ENCODE measurements at regions of chr3 and their contacts with region 1.

Region 1: DNA sequence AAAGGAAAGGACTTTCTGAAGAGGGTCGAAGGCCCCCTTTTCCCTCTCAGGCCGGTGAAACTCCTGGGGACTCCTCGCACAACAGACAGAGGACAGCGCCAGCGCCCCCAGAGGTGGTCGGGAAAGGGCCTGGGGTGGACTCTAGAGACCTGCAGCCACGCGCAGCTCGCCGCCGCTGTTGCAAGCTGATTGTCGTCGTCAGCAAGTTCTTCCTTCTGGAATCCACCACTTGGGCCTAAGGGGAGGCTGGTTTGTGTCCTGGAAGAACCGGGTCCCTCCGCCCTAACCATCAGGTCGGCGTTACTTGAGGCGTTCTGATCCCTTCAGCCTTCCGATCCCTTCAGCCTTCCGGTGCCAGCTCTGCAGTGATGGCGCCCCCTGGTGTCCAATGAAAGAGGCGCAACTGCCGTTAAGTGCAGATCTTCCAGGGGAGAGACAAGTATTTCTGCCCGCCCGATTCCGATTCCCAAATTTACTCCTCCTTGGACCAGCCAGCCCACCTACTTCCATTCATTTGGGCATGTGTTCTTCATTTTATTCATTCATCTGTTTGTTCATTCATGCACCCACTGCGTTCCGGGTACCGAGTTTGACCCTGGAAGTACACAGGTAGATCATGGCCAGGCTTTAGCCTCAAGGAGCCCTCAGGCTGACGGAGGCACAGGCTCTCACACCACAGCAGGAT is 77.2 kb upstream of the SLC6A11 start:
- DNase-seq: peak; percentile 9
- H3K4me3 ChIP-seq: peak overlapping the region in 1 of 4 donors; percentile 29
- H3K27ac ChIP-seq: no peak overlapping the region
- H3K4me1 ChIP-seq: peaks cover 0 to 6% (median 0%) of the 10 kb centered on the region in 3 donors
- H3K27me3 ChIP-seq: peaks cover 0 to 70% (median 2%) of the 10 kb centered on the region in 4 donors
- CTCF ChIP-seq: peak; percentile 71 to 88 (median 84)
- POLR2A ChIP-seq: no peak

Region 2: GRCh38 chr3:10344147-10344943 is 394.5 kb before region 1 on chr3:
- intact Hi-C with region 1: loop called (anchors 5 kb)
- DNase-seq: no peak
- H3K4me3 ChIP-seq: no peak overlapping the region
- H3K27ac ChIP-seq: no peak overlapping the region
- H3K4me1 ChIP-seq: peaks cover 0 to 6% (median 0%) of the 10 kb centered on the region in 3 donors
- H3K27me3 ChIP-seq: peaks cover 0 to 8% (median 0%) of the 10 kb centered on the region in 4 donors
- CTCF ChIP-seq: peak; percentile 74 to 85 (median 78)
- POLR2A ChIP-seq: no peak

Region 3: GRCh38 chr3:10672422-10672821 is 66.4 kb before region 1 on chr3:
- intact Hi-C with region 1: no loop called
- DNase-seq: no peak
- H3K4me3 ChIP-seq: no peak overlapping the region
- H3K27ac ChIP-seq: no peak overlapping the region
- H3K4me1 ChIP-seq: no peaks in the 10 kb centered on the region
- H3K27me3 ChIP-seq: peaks cover 0 to 41% (median 0%) of the 10 kb centered on the region in 4 donors
- CTCF ChIP-seq: no peak
- POLR2A ChIP-seq: no peak

Measured in esophagus squamous epithelium (tissue), 5 donors.